ENCODE measurements at regions of chr1 and their contacts with region 1.

Region 1: GRCh38 chr1:62725255-62725654 is 37.1 kb upstream of the DOCK7 start:
- DNase-seq: no peak
- CTCF ChIP-seq: no peak

Region 2: GRCh38 chr1:62654744-62655143 is 70.5 kb before region 1 on chr1:
- CTCF ChIA-PET with region 1: no interaction called
- POLR2A ChIA-PET with region 1: no interaction called
- DNase-seq: no peak
- CTCF ChIP-seq: no peak

Region 3: DNA sequence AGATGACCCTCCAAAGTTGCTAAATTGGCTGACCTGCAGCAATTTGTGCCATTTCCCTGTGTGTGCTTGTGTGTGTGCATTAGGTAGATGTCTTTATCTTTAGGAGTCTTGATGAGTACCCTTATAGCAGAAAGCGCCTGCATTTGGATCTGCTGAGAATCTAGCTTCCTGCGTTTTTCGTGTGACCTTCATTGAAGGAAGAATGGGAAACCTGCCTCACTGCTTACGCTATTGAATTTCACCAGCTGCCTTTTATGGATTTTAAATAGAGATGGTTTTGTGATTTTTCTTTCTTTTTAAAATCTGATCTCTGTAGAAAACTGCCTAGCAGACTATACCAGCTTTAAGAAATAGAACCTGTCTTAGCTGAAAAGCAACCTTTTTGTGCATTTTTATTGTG is 1869.2 kb after region 1 on chr1:
- CTCF ChIA-PET with region 1: no interaction called
- POLR2A ChIA-PET with region 1: interaction called, 10 read pairs
- DNase-seq: no peak
- CTCF ChIP-seq: no peak